ENCODE measurements at regions of chr14 and their contacts with region 1.

Region 1: GRCh38 chr14:22405201-22405600 is 183.8 kb downstream of the DAD1 start:
- DNase-seq: no peak
- H3K4me3 ChIP-seq: no peak overlapping the region
- H3K27ac ChIP-seq: no peak overlapping the region
- H3K4me1 ChIP-seq: no peaks in the 10 kb centered on the region
- H3K27me3 ChIP-seq: no peaks in the 10 kb centered on the region
- CTCF ChIP-seq: no peak
- EP300 ChIP-seq: no peak
- POLR2A ChIP-seq: no peak

Region 2: GRCh38 chr14:22221508-22221907 is 183.7 kb before region 1 on chr14:
- intact Hi-C with region 1: no loop called
- DNase-seq: no peak
- H3K4me3 ChIP-seq: no peak overlapping the region
- H3K27ac ChIP-seq: no peak overlapping the region
- H3K4me1 ChIP-seq: no peaks in the 10 kb centered on the region
- H3K27me3 ChIP-seq: no peaks in the 10 kb centered on the region
- CTCF ChIP-seq: no peak
- EP300 ChIP-seq: no peak
- POLR2A ChIP-seq: no peak

Region 3: GRCh38 chr14:22428700-22429291 is 23.6 kb after region 1 on chr14:
- intact Hi-C with region 1: loop called in 1 of 4 experiments (anchors 1 kb)
- DNase-seq: no peak
- H3K4me3 ChIP-seq: no peak overlapping the region
- H3K27ac ChIP-seq: peak overlapping the region in 1 of 2 donors; percentile 7
- H3K4me1 ChIP-seq: peaks cover 18% of the 10 kb centered on the region
- H3K27me3 ChIP-seq: no peaks in the 10 kb centered on the region
- CTCF ChIP-seq: no peak
- EP300 ChIP-seq: no peak
- POLR2A ChIP-seq: no peak

Measured in ovary (tissue), 10 donors.